ENCODE measurements at regions of chr2 and their contacts with region 1.

Region 1: DNA sequence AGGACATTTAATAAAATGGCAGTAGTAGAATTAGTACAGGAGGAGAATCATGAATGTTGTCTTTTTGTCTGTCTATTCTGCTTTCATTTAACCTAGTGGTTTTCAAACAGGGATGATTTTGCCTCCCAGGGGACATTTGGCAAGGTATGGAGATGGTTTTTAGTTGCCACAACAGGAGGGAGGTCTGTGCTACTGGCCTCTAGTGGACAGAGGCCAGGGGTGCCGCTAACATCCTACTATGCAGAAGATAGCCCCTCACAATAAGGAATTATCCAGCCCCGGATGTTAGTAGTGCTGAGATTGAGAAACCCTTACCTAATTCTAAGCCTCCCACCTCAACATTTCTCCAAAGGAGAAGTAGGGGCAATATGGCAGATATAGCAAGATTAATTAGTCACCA is 18.3 kb downstream of the FASTKD2 start:
- DNase-seq: no peak
- H3K4me3 ChIP-seq: no peak overlapping the region
- H3K27ac ChIP-seq: no peak overlapping the region
- H3K4me1 ChIP-seq: no peaks in the 10 kb centered on the region
- H3K27me3 ChIP-seq: no peaks in the 10 kb centered on the region
- CTCF ChIP-seq: peak; percentile 59 to 85 (median 73)
- EP300 ChIP-seq: no peak
- POLR2A ChIP-seq: no peak
- RAD21 ChIP-seq: peak; percentile 38 to 50

Region 2: DNA sequence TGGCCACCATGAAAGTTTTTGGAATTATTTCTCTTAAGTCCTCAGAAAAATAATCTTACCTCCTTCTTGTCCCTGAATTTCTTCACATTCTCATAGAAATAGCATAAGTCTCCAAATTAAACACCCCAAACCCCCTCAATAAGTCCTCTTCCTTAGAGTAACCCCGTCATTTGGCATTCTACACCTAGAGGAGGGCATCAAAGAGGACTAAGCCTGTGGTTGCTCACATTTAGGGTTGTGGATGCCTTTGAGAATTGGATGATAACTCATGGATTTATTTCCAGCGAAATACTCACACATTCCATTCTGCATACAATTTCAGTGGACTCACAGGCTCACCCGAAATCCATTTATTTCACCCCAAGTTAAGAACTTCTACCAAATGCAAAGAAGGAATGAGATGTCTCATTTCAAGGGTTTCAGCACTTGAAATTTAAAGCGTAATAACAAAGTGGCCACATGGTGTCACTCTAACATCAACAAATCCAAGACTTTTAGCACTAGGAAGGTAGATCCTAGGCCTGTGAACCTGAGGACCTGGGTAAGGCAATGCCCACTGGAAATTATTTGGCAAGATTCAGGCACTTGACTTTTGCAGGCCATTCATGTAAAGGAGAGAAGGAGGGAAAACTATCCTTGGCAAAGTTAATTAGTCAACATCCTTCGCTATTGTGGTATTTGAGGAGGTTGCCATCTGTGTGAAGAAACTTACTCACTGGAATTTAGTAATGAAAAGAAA is 90.2 kb before region 1 on chr2:
- CTCF ChIA-PET with region 1: interaction called, 78 read pairs
- POLR2A ChIA-PET with region 1: no interaction called
- DNase-seq: peak; percentile 7 to 50
- H3K4me3 ChIP-seq: no peak overlapping the region
- H3K27ac ChIP-seq: no peak overlapping the region
- H3K4me1 ChIP-seq: no peaks in the 10 kb centered on the region
- H3K27me3 ChIP-seq: no peaks in the 10 kb centered on the region
- CTCF ChIP-seq: peak in 2 of 3 experiments; percentile 70 to 76; a peak in 3 of 4 replicates
- EP300 ChIP-seq: no peak
- POLR2A ChIP-seq: no peak
- RAD21 ChIP-seq: peak; percentile 90 to 96

Region 3: GRCh38 chr2:206765242-206766056 is 18.3 kb before region 1 on chr2 and contains the starts of genes FASTKD2 and MDH1B:
- CTCF ChIA-PET with region 1: interaction called, 27 read pairs
- POLR2A ChIA-PET with region 1: interaction called, 7 read pairs
- DNase-seq: peak; percentile 57 to 87
- H3K4me3 ChIP-seq: peak within 1 kb of the TSS; percentile 85 to 98 (median 92)
- H3K27ac ChIP-seq: peak within 1 kb of the TSS; percentile 82
- H3K4me1 ChIP-seq: no peaks in the 10 kb centered on the region
- H3K27me3 ChIP-seq: no peaks in the 10 kb centered on the region
- CTCF ChIP-seq: no peak
- EP300 ChIP-seq: no peak
- POLR2A ChIP-seq: peak; percentile 92
- RAD21 ChIP-seq: no peak
- total RNA-seq, gene FASTKD2: 37.9 and 38.5 TPM in 2 replicates
- total RNA-seq, gene MDH1B: 2.1 and 2.7 TPM in 2 replicates

Measured in H1 (cell line).